ENCODE measurements at regions of chr1 and their contacts with region 1.

Region 1: GRCh38 chr1:89843281-89844121 is 22.7 kb downstream of the LRRC8D start:
- DNase-seq: peak; percentile 87
- ATAC-seq: peak; percentile 87
- H3K4me3 Mint-ChIP-seq: peak overlapping the region; percentile 91
- H3K27ac Mint-ChIP-seq: peak overlapping the region; percentile 93
- H3K4me1 Mint-ChIP-seq: peaks cover 58% of the 10 kb centered on the region
- H3K27me3 Mint-ChIP-seq: no peaks in the 10 kb centered on the region

Region 2: GRCh38 chr1:89780721-89781120 is 62.8 kb before region 1 on chr1:
- CTCF ChIA-PET with region 1: interaction called, 28 read pairs
- POLR2A ChIA-PET with region 1: interaction called, 7 read pairs
- DNase-seq: no peak
- ATAC-seq: peak; percentile 74
- H3K4me3 Mint-ChIP-seq: no peak overlapping the region
- H3K27ac Mint-ChIP-seq: peak overlapping the region; percentile 43
- H3K4me1 Mint-ChIP-seq: peaks cover 25% of the 10 kb centered on the region
- H3K27me3 Mint-ChIP-seq: no peaks in the 10 kb centered on the region

Region 3: DNA sequence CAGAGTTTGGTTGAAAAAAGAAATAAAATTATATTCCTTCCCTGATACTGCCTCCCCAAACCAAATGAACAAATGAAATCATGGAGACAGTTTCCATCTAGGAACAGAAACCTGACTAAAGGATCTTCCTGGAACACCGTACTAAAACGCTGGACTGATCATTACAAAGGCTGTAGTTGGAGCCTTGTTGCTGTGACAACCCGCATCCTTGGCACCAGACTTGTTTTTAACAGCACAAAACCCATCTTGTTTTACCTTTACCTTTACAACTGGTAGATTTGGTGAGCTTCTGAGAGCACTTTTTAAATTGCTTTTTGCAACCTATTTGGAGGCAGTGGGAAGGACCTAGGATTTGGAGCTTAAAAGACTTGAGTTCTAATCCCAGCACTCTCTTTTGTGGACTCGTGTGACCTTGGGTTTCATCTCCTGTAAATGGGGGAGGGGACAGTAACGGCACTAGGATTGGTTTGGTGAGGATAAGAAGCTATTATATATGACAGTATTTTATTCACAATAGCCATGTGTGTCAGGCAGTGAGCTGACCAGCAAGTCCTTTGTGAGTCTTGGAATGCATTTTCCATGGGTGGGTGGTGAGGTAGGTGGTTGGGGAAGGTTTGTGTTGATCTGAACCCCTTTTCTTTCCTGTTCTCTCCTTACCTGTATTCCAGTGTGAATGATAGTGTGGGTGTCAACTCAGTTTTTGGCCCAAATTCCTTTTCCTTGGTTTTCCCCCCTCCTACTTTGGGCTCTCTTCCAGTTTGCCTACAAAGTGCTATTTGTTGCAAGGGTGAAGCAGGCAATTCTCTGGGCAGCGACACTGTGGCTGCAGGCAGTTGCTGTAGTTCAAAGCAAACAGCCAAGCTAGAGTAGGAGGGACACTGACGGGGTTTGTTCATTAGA is 10.1 kb before region 1 on chr1:
- CTCF ChIA-PET with region 1: interaction called, 18 read pairs
- POLR2A ChIA-PET with region 1: interaction called, 8 read pairs
- DNase-seq: no peak
- ATAC-seq: no peak
- H3K4me3 Mint-ChIP-seq: no peak overlapping the region
- H3K27ac Mint-ChIP-seq: no peak overlapping the region
- H3K4me1 Mint-ChIP-seq: peaks cover 10% of the 10 kb centered on the region
- H3K27me3 Mint-ChIP-seq: peaks cover 2% of the 10 kb centered on the region

Region 4: GRCh38 chr1:89863165-89863830 is 19.8 kb after region 1 on chr1:
- CTCF ChIA-PET with region 1: interaction called, 14 read pairs
- POLR2A ChIA-PET with region 1: interaction called, 4 read pairs
- DNase-seq: no peak
- ATAC-seq: peak; percentile 70
- H3K4me3 Mint-ChIP-seq: no peak overlapping the region
- H3K27ac Mint-ChIP-seq: peak overlapping the region; percentile 71
- H3K4me1 Mint-ChIP-seq: peaks cover 28% of the 10 kb centered on the region
- H3K27me3 Mint-ChIP-seq: no peaks in the 10 kb centered on the region

Region 5: GRCh38 chr1:89987170-89987819 is 143.8 kb after region 1 on chr1:
- CTCF ChIA-PET with region 1: interaction called, 16 read pairs
- POLR2A ChIA-PET with region 1: interaction called, 3 read pairs
- DNase-seq: peak; percentile 73
- ATAC-seq: peak; percentile 88
- H3K4me3 Mint-ChIP-seq: no peak overlapping the region
- H3K27ac Mint-ChIP-seq: no peak overlapping the region
- H3K4me1 Mint-ChIP-seq: no peaks in the 10 kb centered on the region
- H3K27me3 Mint-ChIP-seq: peaks cover 19% of the 10 kb centered on the region

Region 6: DNA sequence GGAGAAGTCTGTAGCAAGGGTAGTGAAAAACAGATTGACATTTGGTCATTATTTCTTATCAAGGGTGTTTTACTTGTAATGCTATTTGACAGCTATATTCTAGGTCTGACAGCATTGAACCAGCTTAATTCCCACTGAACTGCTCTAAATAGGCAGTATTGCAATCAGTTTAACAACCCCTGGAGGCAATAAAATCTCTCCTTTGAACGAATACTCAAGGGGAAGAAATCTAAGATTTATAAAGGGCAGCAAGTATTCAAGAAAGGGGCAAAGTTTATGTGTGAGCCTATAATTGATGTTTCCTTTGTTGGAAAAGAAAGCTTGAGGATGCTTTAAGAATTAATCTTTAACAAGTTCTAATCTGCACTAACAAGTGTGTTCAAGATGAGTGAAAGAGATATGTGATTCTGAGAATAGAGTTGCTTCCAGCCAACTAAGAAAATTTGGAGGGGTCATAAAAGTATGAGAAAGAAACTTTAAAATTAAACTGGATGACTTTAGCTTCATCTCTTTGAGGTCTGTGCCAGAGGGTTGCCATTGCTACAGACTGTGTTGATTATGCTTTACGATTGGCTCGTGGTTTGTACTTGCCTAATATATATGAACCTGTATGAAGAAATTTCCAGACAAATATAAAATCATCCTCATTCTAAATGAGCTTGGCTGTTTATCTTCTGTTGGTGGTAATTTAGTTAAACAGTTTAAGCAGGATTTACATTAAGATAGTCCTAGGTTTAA is 223.9 kb after region 1 on chr1:
- CTCF ChIA-PET with region 1: no interaction called
- POLR2A ChIA-PET with region 1: no interaction called
- DNase-seq: no peak
- ATAC-seq: no peak
- H3K4me3 Mint-ChIP-seq: no peak overlapping the region
- H3K27ac Mint-ChIP-seq: no peak overlapping the region
- H3K4me1 Mint-ChIP-seq: no peaks in the 10 kb centered on the region
- H3K27me3 Mint-ChIP-seq: peaks cover 13% of the 10 kb centered on the region

Measured in activated CD8-positive, alpha-beta T cell treated with anti-CD3 and anti-CD28 coated beads, Interleukin-2, amount 10 ng/mL, durations not matched to agents 7 days and 5 days (primary cell).